ENCODE measurements at regions of chr15 and their contacts with region 1.

Region 1: GRCh38 chr15:57306161-57306943 is 70.0 kb upstream of the CGNL1 start:
- DNase-seq: peak; percentile 92
- ATAC-seq: peak; percentile 92
- H3K4me3 Mint-ChIP-seq: peak overlapping the region; percentile 49
- H3K27ac Mint-ChIP-seq: no peak overlapping the region
- H3K4me1 Mint-ChIP-seq: peaks cover 6% of the 10 kb centered on the region
- H3K27me3 Mint-ChIP-seq: peaks cover 7% of the 10 kb centered on the region

Region 2: GRCh38 chr15:56491110-56491722 is 815.1 kb before region 1 on chr15:
- CTCF ChIA-PET with region 1: interaction called, 13 read pairs
- POLR2A ChIA-PET with region 1: no interaction called
- intact Hi-C with region 1: loop called (anchors 1 to 5 kb)
- DNase-seq: peak; percentile 78
- ATAC-seq: peak; percentile 49
- H3K4me3 Mint-ChIP-seq: no peak overlapping the region
- H3K27ac Mint-ChIP-seq: no peak overlapping the region
- H3K4me1 Mint-ChIP-seq: no peaks in the 10 kb centered on the region
- H3K27me3 Mint-ChIP-seq: no peaks in the 10 kb centered on the region

Region 3: GRCh38 chr15:56821721-56822425 is 484.5 kb before region 1 on chr15:
- CTCF ChIA-PET with region 1: interaction called, 4 read pairs
- POLR2A ChIA-PET with region 1: no interaction called
- intact Hi-C with region 1: loop called (anchors 1 kb)
- DNase-seq: peak; percentile 61
- ATAC-seq: peak; percentile 58
- H3K4me3 Mint-ChIP-seq: no peak overlapping the region
- H3K27ac Mint-ChIP-seq: no peak overlapping the region
- H3K4me1 Mint-ChIP-seq: no peaks in the 10 kb centered on the region
- H3K27me3 Mint-ChIP-seq: no peaks in the 10 kb centered on the region

Region 4: DNA sequence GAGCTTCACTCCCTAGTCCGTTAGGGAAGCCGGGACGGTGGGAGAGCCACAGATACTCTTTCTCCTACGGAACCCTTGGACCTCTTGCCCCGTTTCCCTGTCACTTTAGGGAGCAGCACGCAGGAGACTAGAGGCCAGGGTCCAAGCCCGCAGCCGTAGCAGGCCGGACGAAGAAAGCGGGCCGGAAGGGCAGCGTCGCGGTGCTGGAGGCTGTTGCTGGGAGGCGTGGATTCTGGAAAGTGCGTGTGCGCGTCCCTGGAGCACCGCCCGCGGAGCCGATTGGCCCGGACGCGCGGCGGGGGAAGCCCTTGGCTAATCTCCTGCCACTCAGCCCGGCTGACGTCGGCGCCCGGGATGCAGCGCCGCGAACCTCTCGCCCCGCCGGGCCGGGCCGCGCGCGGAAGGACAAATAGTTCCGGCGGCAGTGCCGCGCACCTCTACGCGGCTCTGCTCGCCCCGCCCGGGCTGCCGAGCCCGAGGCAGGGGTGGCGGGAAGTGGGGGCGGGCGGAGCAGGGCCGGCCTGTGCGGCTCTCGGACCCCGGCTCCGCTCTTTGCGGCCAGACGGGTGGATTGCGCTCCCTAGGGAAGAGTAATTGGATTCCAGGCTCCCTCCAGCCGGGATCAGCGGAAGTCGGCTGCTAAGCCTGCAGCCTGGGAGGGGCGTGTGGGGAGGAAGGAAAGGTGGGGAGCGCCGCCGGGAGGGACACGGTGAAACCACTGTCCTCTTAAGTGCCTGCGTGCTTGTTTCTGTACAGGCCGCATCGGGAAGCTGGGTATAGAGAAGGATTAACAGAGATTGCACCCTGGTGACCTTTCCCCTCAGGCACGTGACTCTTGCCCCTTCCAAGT is 419.2 kb before region 1 on chr15:
- CTCF ChIA-PET with region 1: interaction called, 3 read pairs
- POLR2A ChIA-PET with region 1: no interaction called
- intact Hi-C with region 1: loop called in 1 of 2 experiments (anchors 10 kb)
- DNase-seq: peak; percentile 89
- ATAC-seq: peak; percentile 96
- H3K4me3 Mint-ChIP-seq: peak overlapping the region; percentile 71
- H3K27ac Mint-ChIP-seq: peak overlapping the region; percentile 86
- H3K4me1 Mint-ChIP-seq: peaks cover 20% of the 10 kb centered on the region
- H3K27me3 Mint-ChIP-seq: no peaks in the 10 kb centered on the region

Region 5: DNA sequence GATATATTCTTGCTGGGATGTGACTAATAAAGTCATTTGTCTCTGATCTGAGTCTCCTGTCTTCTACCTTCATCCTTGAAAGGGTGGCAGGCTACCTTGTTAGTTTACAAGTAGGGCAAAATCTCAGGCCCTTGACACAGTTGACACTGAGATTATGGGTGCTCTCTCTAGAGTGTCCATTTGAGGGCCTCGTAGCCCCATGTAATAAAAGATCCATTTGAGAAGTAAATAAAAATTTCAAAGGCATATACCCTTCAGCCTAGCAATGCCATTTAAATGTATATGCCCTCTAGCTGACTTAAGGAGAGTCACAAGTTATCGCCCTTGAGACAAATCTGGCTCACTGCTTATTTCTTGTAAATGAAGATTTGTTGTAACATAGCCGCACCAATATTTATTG is 289.3 kb before region 1 on chr15:
- CTCF ChIA-PET with region 1: no interaction called
- POLR2A ChIA-PET with region 1: no interaction called
- intact Hi-C with region 1: loop called in 1 of 2 experiments (anchors 5 kb)
- DNase-seq: no peak
- ATAC-seq: no peak
- H3K4me3 Mint-ChIP-seq: no peak overlapping the region
- H3K27ac Mint-ChIP-seq: no peak overlapping the region
- H3K4me1 Mint-ChIP-seq: peaks cover 32% of the 10 kb centered on the region
- H3K27me3 Mint-ChIP-seq: no peaks in the 10 kb centered on the region

Region 6: GRCh38 chr15:57146506-57147201 is 159.7 kb before region 1 on chr15:
- CTCF ChIA-PET with region 1: interaction called, 64 read pairs
- POLR2A ChIA-PET with region 1: no interaction called
- intact Hi-C with region 1: loop called (anchors 1 to 2 kb)
- DNase-seq: peak; percentile 9
- ATAC-seq: no peak
- H3K4me3 Mint-ChIP-seq: no peak overlapping the region
- H3K27ac Mint-ChIP-seq: no peak overlapping the region
- H3K4me1 Mint-ChIP-seq: peaks cover 6% of the 10 kb centered on the region
- H3K27me3 Mint-ChIP-seq: no peaks in the 10 kb centered on the region

Region 7: DNA sequence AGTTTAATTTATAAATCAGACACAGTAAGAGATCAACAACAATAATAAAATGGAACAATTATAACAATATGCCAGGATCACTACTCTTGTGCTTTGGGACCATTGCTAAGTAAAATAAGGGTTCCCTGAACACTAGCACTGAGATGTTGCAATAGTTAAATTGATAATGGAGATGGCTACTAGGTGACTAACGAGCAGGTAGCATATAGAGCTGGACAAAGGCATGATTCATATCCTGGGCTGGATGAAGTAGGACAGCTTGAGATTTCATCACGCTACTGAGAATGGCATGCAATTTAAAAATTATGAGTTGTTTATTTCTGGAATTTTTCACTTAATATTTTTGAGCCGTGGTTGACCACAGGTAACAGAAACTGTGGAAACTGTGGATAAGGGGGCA is 264.6 kb after region 1 on chr15:
- CTCF ChIA-PET with region 1: no interaction called
- POLR2A ChIA-PET with region 1: no interaction called
- intact Hi-C with region 1: no loop called
- DNase-seq: no peak
- ATAC-seq: no peak
- H3K4me3 Mint-ChIP-seq: no peak overlapping the region
- H3K27ac Mint-ChIP-seq: no peak overlapping the region
- H3K4me1 Mint-ChIP-seq: no peaks in the 10 kb centered on the region
- H3K27me3 Mint-ChIP-seq: peaks cover 6% of the 10 kb centered on the region

Measured in activated CD4-positive, alpha-beta T cell treated with anti-CD3 and anti-CD28 coated beads for 36 hours (primary cell).